Activated CD4-positive, alpha-beta memory T cell treated with anti-CD3 and anti-CD28 coated beads, Interleukin-2, amount 10 ng/mL, durations not matched to agents 7 days and 5 days (primary cell): ENCODE measurements at regions of chr1 and their contacts with region 1.

Region 1: DNA sequence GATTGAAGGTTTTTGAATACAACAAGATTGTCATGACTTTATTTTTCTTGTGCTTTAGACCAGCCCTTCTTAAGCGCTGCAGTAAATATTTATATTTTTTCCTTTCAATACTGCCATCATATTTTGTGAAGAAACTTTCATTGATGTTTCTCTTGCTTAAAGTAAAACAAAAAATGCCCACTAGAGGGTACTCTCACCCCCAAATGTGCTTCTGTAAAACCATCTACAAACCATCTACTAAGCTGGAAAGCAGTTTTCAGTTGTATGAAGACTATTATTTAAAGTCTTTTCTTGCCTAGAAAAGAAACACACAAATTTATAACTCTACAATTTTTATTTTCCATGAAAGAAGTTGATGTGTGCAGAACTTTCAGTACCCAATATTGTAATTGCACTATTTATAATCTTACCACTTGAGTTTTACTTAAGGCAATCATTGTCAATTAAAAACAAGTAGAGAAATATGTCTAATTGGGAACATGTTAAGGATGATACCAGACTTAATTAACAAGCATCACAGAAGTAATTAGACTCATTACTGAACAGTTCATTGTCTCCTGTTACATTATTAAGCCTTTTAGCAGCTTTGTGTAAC is 10.7 kb downstream of the LEPR start:
- DNase-seq: no peak
- H3K4me3 Mint-ChIP-seq: no peak overlapping the region
- H3K27ac Mint-ChIP-seq: no peak overlapping the region
- H3K4me1 Mint-ChIP-seq: peaks cover 40% of the 10 kb centered on the region
- H3K27me3 Mint-ChIP-seq: no peaks in the 10 kb centered on the region

Region 2: GRCh38 chr1:65343286-65343685 is 87.9 kb before region 1 on chr1:
- CTCF ChIA-PET with region 1: no interaction called
- POLR2A ChIA-PET with region 1: no interaction called
- DNase-seq: no peak
- H3K4me3 Mint-ChIP-seq: no peak overlapping the region
- H3K27ac Mint-ChIP-seq: no peak overlapping the region
- H3K4me1 Mint-ChIP-seq: no peaks in the 10 kb centered on the region
- H3K27me3 Mint-ChIP-seq: no peaks in the 10 kb centered on the region

Region 3: DNA sequence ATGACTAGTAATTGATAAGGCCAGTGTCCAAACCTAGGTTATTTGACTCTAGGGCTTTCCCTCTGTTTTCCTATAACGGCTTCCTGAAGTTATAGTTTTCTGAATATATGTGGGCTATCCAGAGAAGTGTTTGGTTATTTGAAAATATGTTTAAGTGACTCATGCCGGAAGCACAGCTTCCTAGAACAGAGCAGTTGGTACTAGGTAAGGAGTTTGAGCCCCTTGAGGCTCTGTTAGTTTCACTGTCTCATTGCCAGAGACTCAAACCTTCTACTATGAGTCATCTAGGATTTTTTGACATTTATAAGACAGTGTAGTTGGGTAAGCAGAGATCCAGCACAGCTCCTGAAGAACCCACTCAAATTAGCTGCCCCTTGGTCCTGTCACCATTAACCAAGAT is 37.9 kb before region 1 on chr1:
- CTCF ChIA-PET with region 1: interaction called, 13 read pairs
- POLR2A ChIA-PET with region 1: no interaction called
- DNase-seq: peak; percentile 59
- H3K4me3 Mint-ChIP-seq: no peak overlapping the region
- H3K27ac Mint-ChIP-seq: peak overlapping the region; percentile 88
- H3K4me1 Mint-ChIP-seq: peaks cover 90% of the 10 kb centered on the region
- H3K27me3 Mint-ChIP-seq: no peaks in the 10 kb centered on the region

Region 4: GRCh38 chr1:65478379-65479026 is 47.3 kb after region 1 on chr1:
- CTCF ChIA-PET with region 1: no interaction called
- POLR2A ChIA-PET with region 1: no interaction called
- DNase-seq: no peak
- H3K4me3 Mint-ChIP-seq: no peak overlapping the region
- H3K27ac Mint-ChIP-seq: no peak overlapping the region
- H3K4me1 Mint-ChIP-seq: no peaks in the 10 kb centered on the region
- H3K27me3 Mint-ChIP-seq: no peaks in the 10 kb centered on the region